ENCODE measurements at regions of chr16 and their contacts with region 1.

Region 1: DNA sequence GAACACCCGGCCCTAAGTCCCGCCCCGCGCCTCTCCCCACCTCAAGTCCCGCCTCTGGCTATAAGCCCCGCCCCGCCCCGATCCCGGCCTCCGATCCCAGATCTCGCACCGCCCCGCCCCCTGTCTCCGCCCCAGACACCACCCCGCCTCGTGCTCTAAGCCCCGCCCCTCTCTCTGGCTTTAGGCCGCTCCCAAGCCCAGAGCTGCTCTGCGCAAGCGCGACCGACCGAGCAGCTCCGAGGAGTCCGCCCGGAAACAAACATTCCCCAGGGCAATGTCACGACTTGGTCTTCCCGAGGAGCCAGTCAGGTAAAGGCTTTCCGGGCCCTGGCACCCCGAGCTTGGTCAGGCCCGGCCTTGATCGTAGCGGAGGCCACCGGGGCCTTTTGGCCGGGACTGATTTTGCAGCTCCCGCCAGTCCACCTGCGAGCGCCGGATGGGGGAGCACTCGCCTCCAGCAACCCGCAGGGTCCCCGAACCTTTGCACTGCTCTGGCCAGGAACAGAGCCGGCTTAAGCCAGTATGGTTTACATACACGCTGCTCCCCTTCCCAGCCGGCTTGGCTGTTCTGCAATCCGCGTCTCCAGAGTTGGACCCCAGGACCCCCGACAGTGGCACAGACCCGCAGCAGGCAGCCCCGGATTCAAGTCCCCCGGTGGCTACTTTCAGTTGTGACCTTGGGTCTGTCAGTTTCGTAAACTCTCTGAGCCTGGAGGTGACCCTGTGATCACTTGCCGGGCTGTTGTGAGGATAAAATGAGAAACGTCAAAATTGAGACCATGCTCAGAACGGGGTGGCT is at the start of gene NUDT7:
- DNase-seq: peak; percentile 99 to 100
- ATAC-seq: peak; percentile 99 to 100 (median 100)
- H3K4me3 ChIP-seq: peak within 1 kb of the TSS; percentile 52 to 94 (median 82)
- H3K27ac ChIP-seq: peak within 1 kb of the TSS; percentile 52 to 97 (median 93)
- H3K4me1 ChIP-seq: peaks cover 0 to 13% (median 9%) of the 10 kb centered on the region in 9 donors
- H3K27me3 ChIP-seq: no peaks in the 10 kb centered on the region
- CTCF ChIP-seq: peak in 6 of 9 donors; percentile 11 to 59 (median 38)
- total RNA-seq, gene NUDT7: 29.5 to 75.7 (median 55.2) TPM

Region 2: GRCh38 chr16:77971306-77972271 is 249.1 kb after region 1 on chr16:
- intact Hi-C with region 1: loop called in 1 of 10 experiments (anchors 2 kb)
- DNase-seq: peak; percentile 80 to 83
- ATAC-seq: peak; percentile 81 to 92 (median 86)
- H3K4me3 ChIP-seq: no peak overlapping the region
- H3K27ac ChIP-seq: no peak overlapping the region
- H3K4me1 ChIP-seq: no peaks in the 10 kb centered on the region
- H3K27me3 ChIP-seq: peaks cover 0 to 11% (median 0%) of the 10 kb centered on the region in 7 donors
- CTCF ChIP-seq: peak; percentile 71 to 87 (median 82)

Region 3: GRCh38 chr16:78099372-78100161 is 377.1 kb after region 1 on chr16 and contains the start of gene WWOX:
- intact Hi-C with region 1: loop called in 1 of 10 experiments (anchors 5 kb)
- DNase-seq: peak; percentile 95 to 96
- ATAC-seq: peak; percentile 97 to 99 (median 98)
- H3K4me3 ChIP-seq: peak within 1 kb of the TSS; percentile 69 to 100 (median 82)
- H3K27ac ChIP-seq: peak within 1 kb of the TSS; percentile 14 to 92 (median 88)
- H3K4me1 ChIP-seq: peaks cover 3 to 15% (median 8%) of the 10 kb centered on the region in 9 donors
- H3K27me3 ChIP-seq: peaks cover 0 to 8% (median 0%) of the 10 kb centered on the region in 7 donors
- CTCF ChIP-seq: peak; percentile 57 to 89 (median 82)
- total RNA-seq, gene WWOX: 6.1 to 15.0 (median 10.3) TPM